Pancreas (tissue), 10 donors: ENCODE measurements at regions of chr1 and their contacts with region 1.

Region 1: GRCh38 chr1:145601593-145601992 is 6.2 kb upstream of the GPR89A start:
- DNase-seq: no peak
- ATAC-seq: no peak
- H3K4me3 ChIP-seq: no peak overlapping the region
- H3K27ac ChIP-seq: no peak overlapping the region
- H3K4me1 ChIP-seq: no peaks in the 10 kb centered on the region
- H3K27me3 ChIP-seq: no peaks in the 10 kb centered on the region
- CTCF ChIP-seq: no peak

Region 2: GRCh38 chr1:145706086-145706680 is 104.6 kb after region 1 on chr1:
- intact Hi-C with region 1: no loop called
- DNase-seq: no peak
- ATAC-seq: no peak
- H3K4me3 ChIP-seq: no peak overlapping the region
- H3K27ac ChIP-seq: peak overlapping the region in 2 of 4 donors; percentile 29 to 83
- H3K4me1 ChIP-seq: peaks cover 19 to 27% (median 24%) of the 10 kb centered on the region in 3 donors
- H3K27me3 ChIP-seq: no peaks in the 10 kb centered on the region
- CTCF ChIP-seq: no peak

Region 3: DNA sequence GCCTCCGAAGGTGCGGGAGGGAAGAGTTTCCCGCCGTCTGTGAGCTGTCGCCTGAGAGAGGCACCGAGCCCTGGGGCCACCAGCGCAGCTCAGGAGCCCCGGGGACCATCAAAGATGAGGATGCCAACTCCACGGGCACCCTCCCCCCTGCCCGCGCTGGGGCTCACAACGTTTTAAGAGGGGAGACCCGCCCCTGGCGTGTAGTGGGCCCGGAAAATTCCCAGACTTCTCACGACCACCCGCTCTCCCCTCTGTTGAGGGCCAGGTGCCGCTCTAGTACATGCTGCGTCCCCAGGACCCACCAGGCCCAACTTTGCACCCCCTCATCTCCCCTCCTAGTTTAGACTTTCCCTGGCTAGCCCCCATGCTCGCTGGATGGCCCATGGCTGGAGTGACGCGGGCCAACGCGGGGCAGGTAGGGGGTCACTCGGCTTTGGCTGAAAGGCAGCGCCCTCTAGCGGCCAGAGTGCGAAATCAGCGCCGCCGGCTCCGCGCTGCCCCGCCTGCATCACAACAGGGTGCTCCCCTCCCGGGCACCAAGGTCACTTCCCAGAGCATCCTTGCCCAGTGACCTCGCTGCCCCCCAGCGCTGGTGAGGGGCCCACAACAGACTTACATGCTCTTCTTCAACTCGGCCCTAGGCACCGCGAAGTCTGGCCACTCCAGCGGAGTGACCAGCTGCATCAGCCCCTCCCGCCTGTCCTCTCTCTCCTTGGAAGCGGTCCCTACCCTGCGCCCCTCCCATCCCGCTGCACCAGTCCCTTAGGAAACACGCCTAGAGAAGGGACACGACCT is 119.5 kb after region 1 on chr1:
- intact Hi-C with region 1: loop called in 1 of 3 experiments (anchors 5 kb)
- DNase-seq: peak; percentile 49 to 93 (median 75)
- ATAC-seq: peak; percentile 92 to 98 (median 96)
- H3K4me3 ChIP-seq: peak overlapping the region in 2 of 4 donors; percentile 22 to 27
- H3K27ac ChIP-seq: no peak overlapping the region
- H3K4me1 ChIP-seq: peaks cover 0 to 3% (median 0%) of the 10 kb centered on the region in 3 donors
- H3K27me3 ChIP-seq: no peaks in the 10 kb centered on the region
- CTCF ChIP-seq: peak; percentile 87 to 99 (median 94)

Region 4: DNA sequence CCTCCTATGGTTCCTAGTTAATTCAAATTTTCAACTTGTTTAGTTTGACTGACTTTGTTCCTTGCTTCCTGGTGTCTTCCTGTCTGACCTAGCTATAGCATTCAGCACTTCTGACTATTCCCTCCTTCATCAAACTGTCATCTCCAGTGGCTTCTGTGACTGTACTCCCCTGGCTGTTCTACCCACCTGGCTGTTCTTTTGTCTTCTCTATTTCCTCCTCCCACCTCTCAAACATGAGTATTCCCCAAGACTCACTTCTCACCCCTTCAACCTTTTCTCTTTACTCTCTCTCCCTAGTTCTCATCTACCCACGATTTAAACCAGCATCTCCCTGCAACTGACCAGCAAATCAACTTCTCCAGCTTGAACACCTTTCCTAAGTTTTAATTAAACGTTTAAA is 131.9 kb after region 1 on chr1:
- intact Hi-C with region 1: no loop called
- DNase-seq: no peak
- ATAC-seq: no peak
- H3K4me3 ChIP-seq: no peak overlapping the region
- H3K27ac ChIP-seq: no peak overlapping the region
- H3K4me1 ChIP-seq: no peaks in the 10 kb centered on the region
- H3K27me3 ChIP-seq: no peaks in the 10 kb centered on the region
- CTCF ChIP-seq: no peak